ENCODE measurements at regions of chr11 and their contacts with region 1.

Region 1: DNA sequence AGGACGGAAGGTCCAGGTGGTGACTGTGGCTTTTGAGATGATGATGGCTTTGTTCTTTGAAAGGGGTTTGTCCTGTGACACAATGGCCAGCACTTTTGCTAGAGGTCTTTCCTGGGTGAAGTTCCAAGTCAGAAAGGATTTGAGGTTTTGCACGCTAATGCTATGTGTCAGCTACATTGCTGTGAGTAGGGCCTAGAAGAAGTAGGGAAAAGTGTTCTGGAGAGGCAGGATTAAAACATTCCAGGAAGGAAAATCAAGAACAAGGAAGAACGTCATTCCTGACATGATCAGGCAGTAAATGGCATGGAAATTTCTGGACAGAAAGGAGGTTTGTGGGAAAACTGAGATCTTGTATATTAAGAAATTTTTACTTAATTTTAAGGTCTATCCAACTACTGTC is 290.7 kb downstream of the NTM start:
- DNase-seq: no peak
- H3K4me3 ChIP-seq: peak overlapping the region in 54 of 59 donors; percentile 3 to 78 (median 54)
- H3K27ac ChIP-seq: peak overlapping the region; percentile 23 to 100 (median 98)
- H3K27me3 ChIP-seq: no peaks in the 10 kb centered on the region
- CTCF ChIP-seq: no peak

Region 2: GRCh38 chr11:131370090-131370751 is 290.9 kb before region 1 on chr11 and contains the start of gene NTM:
- intact Hi-C with region 1: no loop called
- DNase-seq: peak; percentile 38 to 88 (median 74)
- H3K4me3 ChIP-seq: peak within 1 kb of the TSS; percentile 38 to 86 (median 68)
- H3K27ac ChIP-seq: peak within 1 kb of the TSS in 52 of 59 donors; percentile 2 to 86 (median 68)
- H3K27me3 ChIP-seq: peaks cover 0 to 13% (median 0%) of the 10 kb centered on the region in 45 donors
- CTCF ChIP-seq: peak in 4 of 56 donors; percentile 14 to 25 (median 20)
- total RNA-seq, gene NTM: 122 to 220 (median 161) TPM

Region 3: DNA sequence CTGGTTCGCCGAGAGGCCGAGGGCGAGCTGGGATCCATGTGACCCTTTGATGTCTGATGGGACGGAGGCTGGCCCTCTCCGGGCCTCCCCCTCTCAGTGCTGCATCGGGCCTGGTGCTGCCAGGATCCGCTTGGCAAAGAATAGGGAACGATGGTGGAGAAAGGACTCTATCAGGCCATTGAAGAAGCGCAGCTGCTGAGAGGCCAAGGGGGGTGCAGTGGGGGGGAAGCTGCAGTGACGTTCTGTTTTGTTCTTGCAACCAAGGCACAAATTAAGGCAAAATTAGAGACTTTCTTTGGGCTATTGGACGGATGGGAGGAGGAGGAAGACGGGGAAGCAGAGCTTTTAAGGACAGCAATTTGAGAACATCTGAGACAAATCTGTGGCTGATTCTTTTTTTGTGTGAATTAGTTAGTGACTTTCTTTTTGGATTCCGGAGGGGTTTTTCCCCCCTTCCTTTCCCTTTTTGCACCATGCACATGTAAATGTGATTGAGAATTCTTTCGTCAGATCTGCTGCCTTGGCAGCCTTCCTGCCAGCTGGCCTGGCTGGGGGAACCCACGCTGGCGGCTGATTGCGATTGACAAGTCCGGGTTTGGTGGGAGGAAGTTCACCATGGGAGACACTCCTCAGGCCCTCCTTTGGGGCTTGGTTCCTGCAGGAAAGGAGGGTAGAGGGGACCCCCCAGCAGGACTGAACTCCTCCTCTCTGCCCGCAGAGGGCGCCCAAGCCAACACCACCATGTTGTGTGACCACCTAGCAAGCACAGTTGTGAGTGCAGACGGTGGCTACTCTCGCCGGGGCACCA is 76.1 kb before region 1 on chr11:
- intact Hi-C with region 1: loop called (anchors 1 to 2 kb)
- DNase-seq: peak; percentile 49 to 98 (median 95)
- H3K4me3 ChIP-seq: peak overlapping the region in 52 of 59 donors; percentile 7 to 60 (median 39)
- H3K27ac ChIP-seq: peak overlapping the region; percentile 83 to 100 (median 98)
- H3K27me3 ChIP-seq: no peaks in the 10 kb centered on the region
- CTCF ChIP-seq: peak; percentile 20 to 90 (median 74)

Region 4: DNA sequence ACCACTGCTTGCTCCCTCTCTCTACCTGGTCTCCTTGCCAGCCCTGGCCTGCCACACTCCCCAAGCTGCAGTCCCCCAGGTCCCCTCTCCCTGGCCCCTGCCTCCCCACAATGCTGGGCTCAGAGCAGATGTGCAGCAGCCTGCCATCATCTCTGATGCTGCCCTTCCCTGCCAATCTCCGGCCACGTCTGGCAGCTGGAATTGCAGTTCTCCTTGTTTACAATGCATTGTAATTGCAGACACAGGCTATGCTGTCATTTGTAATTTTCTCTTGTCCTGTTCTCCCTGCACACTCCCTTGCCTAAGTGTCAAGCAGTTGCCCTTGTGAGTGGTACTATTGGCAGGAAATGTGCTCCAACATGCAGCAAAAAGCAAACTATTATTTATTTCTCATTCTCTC is 68.4 kb before region 1 on chr11:
- intact Hi-C with region 1: loop called in 1 of 2 experiments (anchors 2 kb)
- DNase-seq: peak in 5 of 10 donors; percentile 50 to 77 (median 64)
- H3K4me3 ChIP-seq: no peak overlapping the region
- H3K27ac ChIP-seq: peak overlapping the region; percentile 61 to 100 (median 94)
- H3K27me3 ChIP-seq: no peaks in the 10 kb centered on the region
- CTCF ChIP-seq: no peak

Region 5: GRCh38 chr11:131624531-131624930 is 36.6 kb before region 1 on chr11:
- intact Hi-C with region 1: loop called in 1 of 2 experiments (anchors 5 kb)
- DNase-seq: no peak
- H3K4me3 ChIP-seq: no peak overlapping the region
- H3K27ac ChIP-seq: peak overlapping the region in 52 of 59 donors; percentile 1 to 95 (median 50)
- H3K27me3 ChIP-seq: no peaks in the 10 kb centered on the region
- CTCF ChIP-seq: no peak

Region 6: GRCh38 chr11:131674051-131674755 is 13.1 kb after region 1 on chr11:
- intact Hi-C with region 1: no loop called
- DNase-seq: peak; percentile 85 to 94 (median 90)
- H3K4me3 ChIP-seq: peak overlapping the region in 23 of 59 donors; percentile 5 to 58 (median 28)
- H3K27ac ChIP-seq: peak overlapping the region; percentile 46 to 95 (median 84)
- H3K27me3 ChIP-seq: no peaks in the 10 kb centered on the region
- CTCF ChIP-seq: peak; percentile 93 to 100 (median 98)